GM12878 (cell line): ENCODE measurements at regions of chr5 and their contacts with region 1.

Region 1: DNA sequence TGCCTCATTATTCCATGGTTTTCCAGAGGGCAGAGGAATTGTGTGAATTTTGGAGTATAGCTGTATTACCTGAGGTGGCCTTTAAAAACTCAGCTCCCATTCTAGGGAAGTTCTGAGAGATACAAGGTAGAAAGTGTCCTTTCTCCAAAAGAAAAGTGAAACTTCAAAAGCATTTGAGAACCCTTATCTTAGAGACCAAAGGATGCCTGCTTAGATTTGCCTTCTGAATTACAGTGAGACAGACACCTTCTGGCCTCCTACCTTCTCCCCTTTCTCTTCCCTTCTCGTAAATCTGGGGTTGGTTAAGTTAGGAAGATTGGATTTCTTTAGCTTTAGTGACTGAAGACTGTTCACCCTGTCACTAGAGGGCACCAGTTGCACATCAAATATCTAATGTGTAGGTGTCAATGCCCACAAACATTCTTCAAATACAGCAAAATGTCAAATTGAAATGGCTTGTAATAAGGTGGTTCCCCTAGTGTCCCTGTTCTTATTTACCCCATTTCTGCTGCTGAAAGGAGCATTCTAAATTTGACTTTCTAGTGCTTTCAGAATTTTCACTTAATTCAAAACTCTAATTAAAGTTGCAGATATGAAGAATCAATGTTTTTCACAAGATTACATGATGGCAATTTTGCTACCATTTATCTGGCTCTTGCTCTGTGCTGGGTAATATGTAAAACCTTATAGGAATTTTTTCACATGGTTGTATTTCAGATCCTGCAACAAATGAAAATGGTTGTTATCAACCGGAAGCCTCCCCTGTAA is 46.7 kb downstream of the PRRC1 start:
- DNase-seq: no peak
- ATAC-seq: peak; percentile 81
- H3K4me3 ChIP-seq: no peak overlapping the region
- H3K27ac ChIP-seq: no peak overlapping the region
- H3K4me1 ChIP-seq: peaks cover 13% of the 10 kb centered on the region
- H3K27me3 ChIP-seq: no peaks in the 10 kb centered on the region
- CTCF ChIP-seq: peak; percentile 67 to 88 (median 70); a peak in 5 of 6 replicates
- EP300 ChIP-seq: 0 out of 4 replicates have a peak, but pooled peaks of 1 of the 2 experiments have one; percentile 14
- POLR2A ChIP-seq: no peak
- RAD21 ChIP-seq: peak; percentile 93

Region 2: GRCh38 chr5:127586066-127586770 is 22.0 kb after region 1 on chr5:
- CTCF ChIA-PET with region 1: interaction called, 104 read pairs
- POLR2A ChIA-PET with region 1: interaction called, 13 read pairs
- RAD21 ChIA-PET with region 1: interaction called, 249 read pairs
- SMC1A ChIA-PET with region 1: interaction called, 50 read pairs
- in situ Hi-C with region 1: no loop called
- intact Hi-C with region 1: loop called (anchors 1 kb)
- DNase-seq: peak; percentile 79
- ATAC-seq: peak; percentile 69
- H3K4me3 ChIP-seq: 0 out of 2 replicates have a peak overlapping the region, but pooled peaks have one; percentile 13
- H3K27ac ChIP-seq: peak overlapping the region; percentile 56; the same call in 1 of the 2 replicates
- H3K4me1 ChIP-seq: peaks cover 35% of the 10 kb centered on the region
- H3K27me3 ChIP-seq: no peaks in the 10 kb centered on the region
- CTCF ChIP-seq: no peak
- EP300 ChIP-seq: peak; percentile 84 to 86
- POLR2A ChIP-seq: no peak
- RAD21 ChIP-seq: no peak

Region 3: GRCh38 chr5:127757576-127757975 is 193.4 kb after region 1 on chr5:
- CTCF ChIA-PET with region 1: interaction called, 12 read pairs
- POLR2A ChIA-PET with region 1: no interaction called
- RAD21 ChIA-PET with region 1: interaction called, 11 read pairs
- SMC1A ChIA-PET with region 1: interaction called, 6 read pairs
- in situ Hi-C with region 1: no loop called
- intact Hi-C with region 1: loop called (anchors 1 kb)
- DNase-seq: peak; percentile 16
- ATAC-seq: peak; percentile 92
- H3K4me3 ChIP-seq: no peak overlapping the region
- H3K27ac ChIP-seq: no peak overlapping the region
- H3K4me1 ChIP-seq: no peaks in the 10 kb centered on the region
- H3K27me3 ChIP-seq: no peaks in the 10 kb centered on the region
- CTCF ChIP-seq: peak; percentile 14 to 60 (median 21); a peak in 4 of 6 replicates
- EP300 ChIP-seq: no peak
- POLR2A ChIP-seq: no peak
- RAD21 ChIP-seq: peak; percentile 65

Region 4: GRCh38 chr5:127909078-127909477 is 344.9 kb after region 1 on chr5:
- CTCF ChIA-PET with region 1: interaction called, 7 read pairs
- POLR2A ChIA-PET with region 1: no interaction called
- RAD21 ChIA-PET with region 1: interaction called, 3 read pairs
- SMC1A ChIA-PET with region 1: interaction called, 7 read pairs
- in situ Hi-C with region 1: no loop called
- intact Hi-C with region 1: loop called (anchors 5 kb)
- DNase-seq: no peak
- ATAC-seq: peak; percentile 96
- H3K4me3 ChIP-seq: no peak overlapping the region
- H3K27ac ChIP-seq: no peak overlapping the region
- H3K4me1 ChIP-seq: no peaks in the 10 kb centered on the region
- H3K27me3 ChIP-seq: no peaks in the 10 kb centered on the region
- CTCF ChIP-seq: peak; percentile 65 to 82 (median 75)
- EP300 ChIP-seq: no peak
- POLR2A ChIP-seq: no peak
- RAD21 ChIP-seq: peak; percentile 82

Region 5: DNA sequence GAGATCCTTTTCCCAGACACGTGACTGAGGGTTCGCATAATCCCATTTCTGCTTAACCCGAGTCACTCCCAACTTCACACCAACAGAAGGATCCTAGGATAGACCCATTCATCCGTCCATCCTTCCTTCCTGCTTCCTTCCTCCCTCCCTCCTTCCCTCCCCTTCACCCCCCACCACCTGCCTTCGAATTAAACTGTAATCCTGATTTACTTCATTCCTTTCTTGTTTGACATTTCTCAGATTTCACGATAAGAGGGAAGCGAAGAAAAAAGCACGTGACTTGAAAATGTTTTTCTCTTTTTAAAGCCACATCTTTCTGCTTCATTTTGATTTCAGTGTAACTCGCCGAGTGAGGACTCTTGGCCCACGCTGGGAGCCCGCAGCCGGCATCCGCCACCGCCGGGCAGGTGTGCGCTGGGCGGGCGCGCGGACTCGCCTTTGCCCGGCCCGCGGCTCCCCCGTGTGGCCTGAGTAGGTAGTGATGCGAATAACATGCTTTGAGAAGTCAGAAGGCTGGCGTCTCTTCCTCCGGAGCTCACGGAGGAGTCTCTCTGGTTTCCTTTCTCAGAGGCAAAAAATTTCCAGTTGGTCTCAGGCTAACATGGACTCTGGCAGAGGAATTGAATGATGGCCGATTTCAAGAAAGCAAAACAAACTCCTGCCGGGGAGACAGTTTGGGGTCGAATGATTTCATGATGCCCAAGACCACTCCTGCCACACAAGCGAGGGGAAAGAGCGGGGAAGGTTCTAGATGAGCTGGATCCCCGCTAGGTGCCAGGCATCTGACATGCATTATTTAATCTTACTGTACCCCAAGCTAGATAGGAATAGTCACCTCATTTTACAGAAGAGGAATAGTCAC is 637.1 kb after region 1 on chr5:
- CTCF ChIA-PET with region 1: interaction called, 48 read pairs
- POLR2A ChIA-PET with region 1: no interaction called
- RAD21 ChIA-PET with region 1: interaction called, 41 read pairs
- SMC1A ChIA-PET with region 1: interaction called, 6 read pairs
- in situ Hi-C with region 1: loop called (anchors 5 kb)
- intact Hi-C with region 1: loop called (anchors 1 kb)
- DNase-seq: no peak
- ATAC-seq: peak; percentile 97
- H3K4me3 ChIP-seq: no peak overlapping the region
- H3K27ac ChIP-seq: no peak overlapping the region
- H3K4me1 ChIP-seq: peaks cover 4% of the 10 kb centered on the region; the same call in 1 of the 2 replicates
- H3K27me3 ChIP-seq: no peaks in the 10 kb centered on the region
- CTCF ChIP-seq: peak; percentile 81 to 90 (median 86)
- EP300 ChIP-seq: no peak
- POLR2A ChIP-seq: no peak
- RAD21 ChIP-seq: peak; percentile 97

Region 6: DNA sequence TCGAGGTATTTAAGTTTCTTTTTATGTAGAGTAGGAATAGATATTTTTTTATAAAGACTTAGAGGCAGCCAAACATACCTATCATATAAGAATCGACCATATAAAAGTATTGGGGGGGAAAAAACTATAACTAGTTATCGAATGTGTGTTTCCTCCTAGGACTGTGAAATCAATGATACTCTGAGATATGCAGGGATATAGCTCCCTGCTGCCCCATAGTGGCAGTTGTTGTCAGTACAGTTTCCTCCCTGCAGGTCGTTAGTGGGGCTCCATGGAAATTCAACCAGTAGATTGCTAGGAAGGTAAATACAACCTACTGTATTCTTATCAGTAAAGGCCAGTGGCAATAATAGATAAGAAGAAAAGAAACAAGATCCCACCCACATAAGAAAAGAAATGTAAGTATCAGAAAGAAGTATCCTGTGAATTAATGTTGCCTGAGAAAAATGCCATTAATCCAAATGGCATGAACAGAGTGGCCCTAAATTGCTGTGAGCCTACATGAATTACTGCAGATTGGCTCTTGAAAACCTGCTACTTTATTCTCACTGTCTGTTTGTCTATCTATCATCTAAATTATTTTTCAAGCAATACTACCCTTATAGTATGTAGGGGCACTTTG is 1110.8 kb after region 1 on chr5:
- CTCF ChIA-PET with region 1: interaction called, 5 read pairs
- POLR2A ChIA-PET with region 1: no interaction called
- RAD21 ChIA-PET with region 1: no interaction called
- SMC1A ChIA-PET with region 1: interaction called, 3 read pairs
- in situ Hi-C with region 1: no loop called
- intact Hi-C with region 1: loop called (anchors 10 kb)
- DNase-seq: no peak
- ATAC-seq: peak; percentile 92
- H3K4me3 ChIP-seq: no peak overlapping the region
- H3K27ac ChIP-seq: no peak overlapping the region
- H3K4me1 ChIP-seq: no peaks in the 10 kb centered on the region
- H3K27me3 ChIP-seq: no peaks in the 10 kb centered on the region
- CTCF ChIP-seq: peak; percentile 60 to 68 (median 63)
- EP300 ChIP-seq: no peak
- POLR2A ChIP-seq: no peak
- RAD21 ChIP-seq: peak; percentile 53